GM10248 (cell line): ENCODE measurements at regions of chrX and their contacts with region 1.

Region 1: GRCh38 chrX:17944833-17945497 is 83.9 kb upstream of the RAI2 start:
- DNase-seq: peak; percentile 5
- CTCF ChIP-seq: peak; percentile 32

Region 2: DNA sequence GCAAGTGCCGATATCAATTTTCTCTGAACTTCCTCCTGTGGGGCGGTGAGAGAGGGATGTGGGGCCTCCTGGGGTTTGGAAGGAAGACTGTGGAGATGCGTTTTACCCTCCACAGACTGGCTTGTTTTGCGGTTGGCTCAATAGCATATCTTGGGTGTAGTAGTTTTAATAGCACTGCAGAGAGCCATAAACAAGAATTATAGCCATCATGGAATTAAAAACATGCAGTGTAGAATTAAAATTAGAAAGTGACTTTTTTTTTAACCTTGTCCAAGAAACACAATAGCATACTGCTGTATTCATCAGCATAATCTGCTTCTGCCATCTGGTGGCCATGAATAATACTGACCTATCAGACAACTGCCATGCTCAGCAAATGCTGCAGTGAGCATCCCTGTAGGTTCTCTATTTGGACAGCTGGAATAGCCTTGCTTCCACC is 255.0 kb before region 1 on chrX:
- CTCF ChIA-PET with region 1: no interaction called
- POLR2A ChIA-PET with region 1: no interaction called
- DNase-seq: peak; percentile 26
- CTCF ChIP-seq: peak; percentile 32

Region 3: DNA sequence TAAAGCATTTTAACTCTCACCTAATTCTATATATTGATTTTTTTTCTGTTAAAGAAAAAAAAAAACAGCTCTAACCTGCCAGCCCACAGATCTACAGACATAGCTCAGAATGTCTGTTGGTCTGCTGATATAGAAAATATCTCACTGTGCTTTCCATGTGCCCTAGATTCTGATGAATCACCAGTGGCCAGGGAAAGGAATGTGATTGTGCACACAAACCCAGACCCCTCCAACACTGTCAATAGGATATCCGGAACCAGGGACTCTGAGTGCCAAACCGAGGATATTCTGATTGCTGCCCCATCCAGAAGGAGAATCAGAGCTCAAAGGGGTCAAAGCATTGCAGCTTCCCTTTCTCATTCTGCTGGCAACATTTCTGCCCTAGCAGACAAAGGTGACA is 219.8 kb before region 1 on chrX:
- CTCF ChIA-PET with region 1: no interaction called
- POLR2A ChIA-PET with region 1: no interaction called
- DNase-seq: no peak
- CTCF ChIP-seq: no peak

Region 4: GRCh38 chrX:17960891-17961290 is 15.9 kb after region 1 on chrX:
- CTCF ChIA-PET with region 1: interaction called, 12 read pairs
- POLR2A ChIA-PET with region 1: no interaction called
- DNase-seq: no peak
- CTCF ChIP-seq: no peak

Region 5: GRCh38 chrX:18377796-18378195 is 432.8 kb after region 1 on chrX:
- CTCF ChIA-PET with region 1: interaction called, 12 read pairs
- POLR2A ChIA-PET with region 1: no interaction called
- DNase-seq: no peak
- CTCF ChIP-seq: peak; percentile 37